H1 (cell line): ENCODE measurements at regions of chr14 and their contacts with region 1.

Region 1: GRCh38 chr14:100654814-100655740 is 67.9 kb upstream of the BEGAIN start:
- DNase-seq: peak in 1 of 2 experiments; percentile 83
- H3K4me3 ChIP-seq: peak overlapping the region; percentile 12 to 51 (median 24); a peak in 6 of 8 replicates
- H3K27ac ChIP-seq: no peak overlapping the region
- H3K4me1 ChIP-seq: peaks cover 0 to 17% (median 7%) of the 10 kb centered on the region in 4 experiments; a peak in 5 of 7 replicates
- H3K27me3 ChIP-seq: peaks cover 0 to 8% (median 1%) of the 10 kb centered on the region in 4 experiments; a peak in 2 of 7 replicates
- CTCF ChIP-seq: peak; percentile 81 to 96 (median 86)
- EP300 ChIP-seq: no peak
- POLR2A ChIP-seq: no peak
- RAD21 ChIP-seq: peak; percentile 64 to 79

Region 2: GRCh38 chr14:100406505-100407131 is 248.5 kb before region 1 on chr14:
- CTCF ChIA-PET with region 1: interaction called, 17 read pairs
- POLR2A ChIA-PET with region 1: no interaction called
- DNase-seq: no peak
- H3K4me3 ChIP-seq: no peak overlapping the region
- H3K27ac ChIP-seq: no peak overlapping the region
- H3K4me1 ChIP-seq: peaks cover 7 to 19% (median 14%) of the 10 kb centered on the region in 4 experiments
- H3K27me3 ChIP-seq: no peaks in the 10 kb centered on the region
- CTCF ChIP-seq: no peak
- EP300 ChIP-seq: no peak
- POLR2A ChIP-seq: no peak
- RAD21 ChIP-seq: no peak

Region 3: GRCh38 chr14:100424504-100425418 is 230.3 kb before region 1 on chr14:
- CTCF ChIA-PET with region 1: interaction called, 16 read pairs
- POLR2A ChIA-PET with region 1: no interaction called
- DNase-seq: no peak
- H3K4me3 ChIP-seq: no peak overlapping the region
- H3K27ac ChIP-seq: no peak overlapping the region
- H3K4me1 ChIP-seq: peaks cover 0 to 8% (median 2%) of the 10 kb centered on the region in 4 experiments; a peak in 6 of 7 replicates
- H3K27me3 ChIP-seq: no peaks in the 10 kb centered on the region
- CTCF ChIP-seq: no peak
- EP300 ChIP-seq: no peak
- POLR2A ChIP-seq: no peak
- RAD21 ChIP-seq: no peak

Region 4: DNA sequence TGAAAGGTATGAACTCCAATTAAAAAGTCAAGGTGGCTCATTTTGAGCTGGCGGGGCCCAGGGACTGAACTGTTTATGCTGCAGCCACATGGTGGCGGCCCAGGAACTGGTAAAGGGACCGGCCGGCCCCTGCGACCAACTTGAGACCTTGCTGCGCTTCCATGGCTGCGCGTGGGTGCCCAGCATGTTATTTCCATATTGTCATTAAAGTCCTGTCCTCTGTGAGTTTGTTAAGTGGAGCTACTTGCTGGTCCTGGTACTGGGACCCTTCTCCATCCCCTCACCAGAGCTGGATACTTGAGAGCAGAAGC is 130.2 kb before region 1 on chr14:
- CTCF ChIA-PET with region 1: interaction called, 61 read pairs
- POLR2A ChIA-PET with region 1: no interaction called
- DNase-seq: peak in 1 of 2 experiments; percentile 75
- H3K4me3 ChIP-seq: no peak overlapping the region
- H3K27ac ChIP-seq: no peak overlapping the region
- H3K4me1 ChIP-seq: peaks cover 2 to 8% (median 5%) of the 10 kb centered on the region in 4 experiments; a peak in 4 of 7 replicates
- H3K27me3 ChIP-seq: no peaks in the 10 kb centered on the region; a peak in 1 of 7 replicates
- CTCF ChIP-seq: peak; percentile 61 to 88 (median 67)
- EP300 ChIP-seq: no peak
- POLR2A ChIP-seq: no peak
- RAD21 ChIP-seq: peak; percentile 89 to 92

Region 5: DNA sequence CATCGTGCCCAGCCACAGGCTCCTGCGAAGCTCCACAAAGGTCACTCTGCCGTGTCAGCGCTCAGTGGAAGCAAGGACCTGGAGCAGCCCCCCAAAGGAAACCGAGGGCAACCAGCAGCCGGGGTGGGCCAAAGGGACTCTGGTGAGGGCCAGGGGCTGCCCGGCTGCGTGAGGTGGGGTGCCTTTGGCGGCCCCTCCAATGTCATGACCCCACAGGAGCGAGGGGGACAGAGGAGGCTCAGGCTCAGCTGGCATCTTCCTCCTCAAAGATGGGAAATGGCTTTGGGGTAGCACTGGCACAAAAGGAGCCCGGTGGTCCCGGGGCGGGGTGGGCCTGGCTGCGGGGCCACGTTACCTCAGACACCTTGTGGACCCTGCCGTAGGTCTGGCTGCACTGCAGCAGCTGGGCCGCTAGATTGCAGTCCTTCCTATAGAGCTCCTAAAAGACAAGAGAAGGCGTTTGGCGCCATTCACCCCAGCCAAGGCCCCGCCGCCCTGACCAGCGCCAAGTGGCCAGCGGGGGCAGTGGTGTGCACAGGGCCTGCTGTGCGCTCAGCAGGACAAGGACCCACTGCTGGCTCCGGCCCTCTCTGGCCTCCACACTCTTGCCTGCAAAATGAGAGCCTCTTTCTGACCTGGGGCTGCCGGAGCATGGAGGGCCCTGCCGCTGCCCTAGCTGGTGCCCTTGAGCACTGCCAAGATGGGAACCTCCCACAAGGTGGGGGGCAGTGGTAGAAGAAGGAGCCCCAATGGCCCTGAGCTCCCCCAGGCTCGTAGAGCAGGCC is 114.7 kb before region 1 on chr14:
- CTCF ChIA-PET with region 1: interaction called, 57 read pairs
- POLR2A ChIA-PET with region 1: no interaction called
- DNase-seq: peak in 1 of 2 experiments; percentile 17
- H3K4me3 ChIP-seq: no peak overlapping the region
- H3K27ac ChIP-seq: no peak overlapping the region
- H3K4me1 ChIP-seq: peaks cover 1 to 5% (median 3%) of the 10 kb centered on the region in 4 experiments; a peak in 3 of 7 replicates
- H3K27me3 ChIP-seq: no peaks in the 10 kb centered on the region; a peak in 1 of 7 replicates
- CTCF ChIP-seq: peak in 2 of 3 experiments; percentile 73 to 78; a peak in 3 of 4 replicates
- EP300 ChIP-seq: no peak
- POLR2A ChIP-seq: no peak
- RAD21 ChIP-seq: peak; percentile 37 to 47

Region 6: DNA sequence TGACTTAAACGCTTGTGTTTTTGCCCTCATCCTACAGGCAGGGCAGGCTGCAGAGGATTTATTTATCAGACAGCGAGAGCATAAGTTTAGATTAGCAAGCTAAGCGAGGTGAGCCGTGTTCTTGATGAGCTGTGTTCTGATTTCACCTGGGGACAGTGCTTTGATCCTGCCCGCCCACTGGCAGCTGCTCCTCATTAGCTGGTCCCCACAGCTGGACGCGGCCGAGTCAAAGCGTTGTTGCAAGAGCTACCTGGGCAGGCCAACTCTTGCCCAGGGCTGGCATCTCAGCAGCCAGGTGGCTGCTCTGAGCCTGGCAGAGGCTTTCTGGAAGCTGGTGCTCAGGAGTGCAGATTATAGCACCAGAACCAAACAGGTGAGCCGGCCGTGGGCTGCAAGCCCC is 21.1 kb before region 1 on chr14:
- CTCF ChIA-PET with region 1: interaction called, 28 read pairs
- POLR2A ChIA-PET with region 1: no interaction called
- DNase-seq: no peak
- H3K4me3 ChIP-seq: no peak overlapping the region
- H3K27ac ChIP-seq: no peak overlapping the region
- H3K4me1 ChIP-seq: peaks cover 0 to 10% (median under 1%) of the 10 kb centered on the region in 4 experiments; a peak in 2 of 7 replicates
- H3K27me3 ChIP-seq: no peaks in the 10 kb centered on the region; a peak in 1 of 7 replicates
- CTCF ChIP-seq: no peak
- EP300 ChIP-seq: no peak
- POLR2A ChIP-seq: no peak
- RAD21 ChIP-seq: no peak

Region 7: DNA sequence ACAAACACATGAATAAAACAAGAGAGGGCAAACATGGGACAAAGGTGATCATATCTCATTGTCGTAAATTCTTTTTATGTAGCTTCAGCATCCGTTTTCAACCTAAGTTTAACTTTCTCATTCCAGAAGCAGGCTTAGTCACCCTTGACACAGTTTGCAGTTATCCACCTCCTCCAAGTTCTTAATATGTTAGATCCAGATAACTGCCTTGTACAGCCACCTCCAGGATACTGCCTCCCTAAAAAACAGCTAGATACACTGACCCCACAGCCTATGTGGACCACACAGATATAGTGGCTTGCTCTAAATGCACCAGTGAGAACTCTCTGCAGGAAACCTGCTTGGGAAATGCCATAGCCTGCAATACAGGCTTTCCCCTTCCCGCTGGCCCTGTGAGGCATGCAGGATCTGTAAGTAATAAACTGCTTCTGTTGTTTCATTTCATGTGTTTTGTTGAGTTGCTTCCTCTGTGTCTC is 259.5 kb after region 1 on chr14:
- CTCF ChIA-PET with region 1: no interaction called
- POLR2A ChIA-PET with region 1: no interaction called
- DNase-seq: no peak
- H3K4me3 ChIP-seq: no peak overlapping the region
- H3K27ac ChIP-seq: no peak overlapping the region
- H3K4me1 ChIP-seq: no peaks in the 10 kb centered on the region
- H3K27me3 ChIP-seq: no peaks in the 10 kb centered on the region
- CTCF ChIP-seq: no peak
- EP300 ChIP-seq: no peak
- POLR2A ChIP-seq: no peak
- RAD21 ChIP-seq: no peak